IMR-90 (cell line): ENCODE measurements at regions of chr17 and their contacts with region 1.

Region 1: DNA sequence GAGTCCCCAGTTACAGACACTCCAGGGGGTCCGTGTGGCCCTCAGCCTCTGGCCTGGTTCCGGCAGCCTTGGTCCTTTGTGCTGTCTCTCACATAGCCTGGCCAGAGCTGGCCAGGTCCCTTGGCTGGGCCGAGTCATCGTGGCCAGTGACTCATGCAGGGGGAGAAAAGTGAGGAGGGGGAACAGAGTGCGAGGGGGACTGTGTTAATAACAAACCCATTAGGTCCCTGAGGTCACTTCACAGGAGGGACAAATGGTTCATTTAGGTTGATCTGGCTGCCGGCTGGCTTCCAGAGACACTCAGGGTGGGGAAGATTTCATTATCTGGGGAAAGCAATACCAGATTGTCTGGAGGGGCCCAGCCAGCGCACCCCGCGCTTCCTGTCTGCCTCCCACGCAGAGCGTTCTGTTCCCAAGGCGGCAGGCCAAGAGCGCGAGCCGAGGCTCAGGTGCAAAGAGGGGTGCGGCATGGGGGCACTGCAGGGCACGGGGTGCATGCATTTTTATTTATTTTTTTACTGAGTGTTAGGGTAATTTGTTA is 223.1 kb downstream of the SEC14L1 start:
- DNase-seq: peak; percentile 58
- ATAC-seq: peak; percentile 27; the same call in 1 of the 2 replicates
- H3K4me3 ChIP-seq: no peak overlapping the region
- H3K27ac ChIP-seq: peak overlapping the region; percentile 62
- H3K4me1 ChIP-seq: peaks cover 42% of the 10 kb centered on the region
- H3K27me3 ChIP-seq: no peaks in the 10 kb centered on the region
- CTCF ChIP-seq: no peak
- POLR2A ChIP-seq: no peak
- RAD21 ChIP-seq: no peak

Region 2: GRCh38 chr17:77388384-77389311 is 24.8 kb after region 1 on chr17:
- CTCF ChIA-PET with region 1: no interaction called
- POLR2A ChIA-PET with region 1: no interaction called
- dilution Hi-C with region 1: no loop called
- in situ Hi-C with region 1: no loop called
- intact Hi-C with region 1: no loop called
- DNase-seq: no peak
- ATAC-seq: no peak
- H3K4me3 ChIP-seq: no peak overlapping the region
- H3K27ac ChIP-seq: peak overlapping the region; percentile 86
- H3K4me1 ChIP-seq: peaks cover 76% of the 10 kb centered on the region
- H3K27me3 ChIP-seq: no peaks in the 10 kb centered on the region
- CTCF ChIP-seq: no peak
- POLR2A ChIP-seq: no peak
- RAD21 ChIP-seq: no peak

Region 3: DNA sequence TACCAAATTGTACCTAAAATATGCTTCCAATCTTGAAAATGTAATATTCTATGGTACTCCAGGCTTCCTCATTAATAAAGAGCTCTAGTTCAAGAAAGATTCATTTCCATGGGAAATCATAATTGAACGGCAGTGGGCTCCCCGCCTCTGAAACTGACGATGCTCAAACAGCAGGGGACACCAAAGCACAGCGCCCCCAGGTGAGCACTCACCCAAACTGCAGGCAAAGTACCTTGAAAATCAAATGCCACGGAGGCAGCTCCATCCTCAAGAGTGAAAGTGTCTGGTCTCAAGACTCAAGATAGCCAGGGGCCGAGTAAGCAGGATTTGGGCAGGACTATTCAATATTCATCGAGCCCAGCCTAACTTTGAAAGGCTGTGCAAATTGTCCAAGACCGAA is 377.2 kb after region 1 on chr17:
- CTCF ChIA-PET with region 1: no interaction called
- POLR2A ChIA-PET with region 1: no interaction called
- dilution Hi-C with region 1: no loop called
- in situ Hi-C with region 1: no loop called
- intact Hi-C with region 1: loop called (anchors 5 kb)
- DNase-seq: no peak
- ATAC-seq: no peak
- H3K4me3 ChIP-seq: no peak overlapping the region
- H3K27ac ChIP-seq: no peak overlapping the region
- H3K4me1 ChIP-seq: no peaks in the 10 kb centered on the region
- H3K27me3 ChIP-seq: peaks cover 19% of the 10 kb centered on the region
- CTCF ChIP-seq: 0 out of 2 replicates have a peak, but pooled peaks have one; percentile 30
- POLR2A ChIP-seq: no peak
- RAD21 ChIP-seq: no peak